Cardiac septum (tissue), 1 donor: ENCODE measurements at regions of chr11 and their contacts with region 1.

Region 1: DNA sequence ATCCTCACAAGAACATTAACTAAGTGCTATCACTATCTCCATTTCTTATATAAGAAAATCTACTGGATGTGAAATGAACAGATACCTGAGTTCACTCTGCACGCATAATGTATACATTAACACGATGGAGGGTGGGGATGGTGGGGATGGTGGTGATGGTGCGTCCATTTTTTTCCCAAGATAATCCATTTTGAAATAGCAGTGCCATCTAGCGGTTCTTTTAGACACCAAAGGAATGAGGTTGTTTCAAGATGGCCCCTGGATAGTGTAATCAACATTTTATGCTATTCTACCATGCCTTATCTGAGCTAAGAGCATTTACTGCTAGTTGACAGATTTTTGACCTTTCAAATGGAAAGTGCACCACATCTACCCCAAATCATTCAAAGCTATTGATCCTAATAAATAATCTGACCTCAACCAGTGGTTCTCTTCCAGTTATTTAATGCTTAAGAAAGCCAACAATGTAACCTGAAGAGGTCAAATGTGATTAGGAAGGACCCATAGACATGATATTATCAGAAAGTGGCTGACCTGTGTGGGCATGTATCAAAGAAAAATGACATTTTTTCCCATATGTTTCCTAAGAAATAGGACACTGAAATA is 714.7 kb upstream of the TENM4 start:
- DNase-seq: no peak

Region 2: GRCh38 chr11:79762279-79762921 is 393.1 kb before region 1 on chr11:
- intact Hi-C with region 1: loop called (anchors 5 kb)
- DNase-seq: no peak

Region 3: GRCh38 chr11:80330264-80330663 is 174.7 kb after region 1 on chr11:
- intact Hi-C with region 1: no loop called
- DNase-seq: no peak